Heart right ventricle (tissue), 16 donors: ENCODE measurements at regions of chr21 and their contacts with region 1.

Region 1: DNA sequence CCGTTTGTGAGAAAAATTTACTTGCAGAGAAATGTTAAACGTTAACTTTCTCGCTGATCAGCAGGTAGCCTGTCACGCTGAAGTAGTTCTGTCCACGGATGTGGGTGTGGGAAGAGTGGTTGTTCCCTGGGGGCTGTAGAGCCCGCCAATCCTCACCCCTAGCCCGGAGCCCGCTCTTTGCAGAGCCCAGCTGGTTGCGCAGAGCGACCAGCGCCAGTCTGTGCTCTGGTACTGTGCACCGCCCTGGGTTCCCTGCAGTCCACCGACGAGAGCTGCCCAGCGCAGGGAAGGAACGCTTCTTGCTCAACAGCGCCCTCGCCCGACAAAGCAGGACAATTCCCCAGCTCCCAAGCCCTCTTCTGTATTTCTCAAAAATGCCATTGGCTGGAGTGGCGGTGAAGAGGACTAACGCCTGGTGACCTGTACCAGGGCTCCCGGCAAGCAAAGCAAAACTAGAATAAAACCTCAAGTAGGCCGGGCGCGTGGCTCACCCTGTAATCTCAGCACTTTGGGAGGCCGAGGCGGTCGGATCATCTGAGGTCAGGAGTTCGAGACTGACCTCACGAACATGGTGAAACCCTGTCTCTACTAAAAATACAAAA is 3.3 kb downstream of the RIPPLY3 start:
- DNase-seq: peak; percentile 76 to 87
- ATAC-seq: peak; percentile 89 to 97 (median 95)
- H3K4me3 ChIP-seq: peak overlapping the region in 5 of 10 donors; percentile 17 to 40 (median 29)
- H3K27ac ChIP-seq: no peak overlapping the region
- H3K4me1 ChIP-seq: peaks cover 0 to 25% (median 15%) of the 10 kb centered on the region in 9 donors
- H3K27me3 ChIP-seq: peaks cover 25 to 87% (median 74%) of the 10 kb centered on the region in 7 donors
- CTCF ChIP-seq: peak; percentile 64 to 88 (median 83)

Region 2: GRCh38 chr21:36504067-36505058 is 505.5 kb before region 1 on chr21:
- intact Hi-C with region 1: loop called in 2 of 10 experiments (anchors 10 kb)
- DNase-seq: peak in 1 of 2 donors; percentile 28
- ATAC-seq: no peak
- H3K4me3 ChIP-seq: no peak overlapping the region
- H3K27ac ChIP-seq: no peak overlapping the region
- H3K4me1 ChIP-seq: no peaks in the 10 kb centered on the region
- H3K27me3 ChIP-seq: peaks cover 0 to 35% (median 6%) of the 10 kb centered on the region in 7 donors
- CTCF ChIP-seq: peak in 8 of 9 donors; percentile 85 to 96 (median 94)